HEK293 (cell line): ENCODE measurements at regions of chr18 and their contacts with region 1.

Region 1: DNA sequence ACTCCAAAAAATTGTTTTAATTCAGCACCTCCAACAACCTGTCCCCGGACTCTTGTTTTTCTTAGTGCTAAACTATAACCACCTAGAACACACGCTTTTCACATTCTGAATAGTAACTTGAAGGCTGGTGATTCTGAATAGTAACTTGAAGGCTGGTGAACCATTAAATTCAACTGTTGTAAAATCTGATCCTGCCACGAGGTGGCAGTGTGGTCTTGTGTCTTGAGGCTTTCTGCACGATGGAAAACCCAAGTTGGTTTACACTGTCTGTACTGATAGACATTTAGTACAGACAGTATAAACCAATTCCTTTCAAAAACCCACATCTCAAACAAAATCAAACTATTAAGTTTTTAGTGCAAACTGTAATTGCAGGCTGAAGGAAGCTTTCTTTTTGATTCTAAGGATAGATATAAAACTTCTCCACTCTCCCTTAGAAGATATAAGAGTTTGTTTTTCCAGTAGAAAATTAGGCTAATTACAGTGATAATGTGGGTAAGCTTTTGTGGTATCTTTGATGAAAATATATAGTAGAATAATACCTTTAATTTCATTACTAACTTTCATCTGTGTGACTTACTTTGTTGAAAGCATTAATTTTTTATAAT is 57.6 kb downstream of the VAPA start:
- H3K4me3 ChIP-seq: no peak overlapping the region
- H3K27ac ChIP-seq: no peak overlapping the region
- H3K4me1 ChIP-seq: no peaks in the 10 kb centered on the region
- CTCF ChIP-seq: peak; percentile 73

Region 2: GRCh38 chr18:9984080-9984479 is 12.7 kb after region 1 on chr18:
- CTCF ChIA-PET with region 1: interaction called, 27 read pairs
- POLR2A ChIA-PET with region 1: no interaction called
- H3K4me3 ChIP-seq: no peak overlapping the region
- H3K27ac ChIP-seq: no peak overlapping the region
- H3K4me1 ChIP-seq: no peaks in the 10 kb centered on the region
- CTCF ChIP-seq: no peak

Region 3: GRCh38 chr18:10519999-10520935 is 548.9 kb after region 1 on chr18:
- CTCF ChIA-PET with region 1: interaction called, 115 read pairs
- POLR2A ChIA-PET with region 1: no interaction called
- H3K4me3 ChIP-seq: no peak overlapping the region
- H3K27ac ChIP-seq: no peak overlapping the region
- H3K4me1 ChIP-seq: peaks cover 2% of the 10 kb centered on the region
- CTCF ChIP-seq: peak; percentile 89